Activated CD4-positive, alpha-beta memory T cell treated with anti-CD3 and anti-CD28 coated beads for 36 hours (primary cell): ENCODE measurements at regions of chr12 and their contacts with region 1.

Region 1: DNA sequence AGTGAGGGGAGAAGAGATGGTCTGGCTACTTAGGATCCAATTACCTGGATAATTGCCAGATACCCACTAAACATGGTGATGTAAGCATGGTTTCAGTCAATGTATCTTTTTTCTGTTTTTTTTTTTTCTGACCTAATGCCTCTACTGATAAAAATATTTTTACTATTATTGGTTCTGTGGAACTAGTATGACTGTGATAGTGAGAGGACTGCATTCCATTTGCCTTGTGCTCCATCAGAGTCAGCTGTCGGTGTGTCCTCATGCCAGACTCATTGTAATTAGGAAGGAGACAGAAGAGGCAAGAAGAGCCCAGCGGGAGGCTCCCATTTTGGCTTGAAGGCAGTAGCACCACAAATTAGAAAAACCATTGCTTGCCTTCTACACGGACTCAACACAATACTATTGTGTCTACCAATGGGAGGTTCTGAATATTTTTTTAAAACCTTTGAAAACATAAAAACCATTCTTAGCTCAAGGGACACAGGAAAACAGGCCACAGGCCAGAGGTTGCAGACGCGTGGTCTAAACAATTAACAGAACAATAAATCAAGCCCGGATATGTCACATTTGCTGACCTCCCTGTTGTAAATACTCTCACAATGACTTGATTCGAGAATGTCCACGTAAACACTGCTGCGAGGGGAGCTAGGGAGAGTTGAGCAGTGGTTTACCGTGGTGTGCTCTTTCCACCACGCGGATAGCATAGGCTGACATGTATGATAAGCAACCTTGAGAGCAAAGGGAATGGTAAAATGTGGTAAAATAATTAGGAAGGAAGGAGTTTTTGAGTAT is 13.5 kb upstream of the DCP1B start:
- DNase-seq: no peak
- H3K4me3 Mint-ChIP-seq: no peak overlapping the region
- H3K27ac Mint-ChIP-seq: no peak overlapping the region
- H3K4me1 Mint-ChIP-seq: peaks cover 10% of the 10 kb centered on the region
- H3K27me3 Mint-ChIP-seq: peaks cover 8% of the 10 kb centered on the region

Region 2: GRCh38 chr12:2034633-2035430 is 17.1 kb after region 1 on chr12:
- CTCF ChIA-PET with region 1: interaction called, 12 read pairs
- POLR2A ChIA-PET with region 1: no interaction called
- intact Hi-C with region 1: no loop called
- DNase-seq: peak; percentile 89
- H3K4me3 Mint-ChIP-seq: peak overlapping the region; percentile 62
- H3K27ac Mint-ChIP-seq: no peak overlapping the region
- H3K4me1 Mint-ChIP-seq: peaks cover 10% of the 10 kb centered on the region
- H3K27me3 Mint-ChIP-seq: peaks cover 26% of the 10 kb centered on the region

Region 3: DNA sequence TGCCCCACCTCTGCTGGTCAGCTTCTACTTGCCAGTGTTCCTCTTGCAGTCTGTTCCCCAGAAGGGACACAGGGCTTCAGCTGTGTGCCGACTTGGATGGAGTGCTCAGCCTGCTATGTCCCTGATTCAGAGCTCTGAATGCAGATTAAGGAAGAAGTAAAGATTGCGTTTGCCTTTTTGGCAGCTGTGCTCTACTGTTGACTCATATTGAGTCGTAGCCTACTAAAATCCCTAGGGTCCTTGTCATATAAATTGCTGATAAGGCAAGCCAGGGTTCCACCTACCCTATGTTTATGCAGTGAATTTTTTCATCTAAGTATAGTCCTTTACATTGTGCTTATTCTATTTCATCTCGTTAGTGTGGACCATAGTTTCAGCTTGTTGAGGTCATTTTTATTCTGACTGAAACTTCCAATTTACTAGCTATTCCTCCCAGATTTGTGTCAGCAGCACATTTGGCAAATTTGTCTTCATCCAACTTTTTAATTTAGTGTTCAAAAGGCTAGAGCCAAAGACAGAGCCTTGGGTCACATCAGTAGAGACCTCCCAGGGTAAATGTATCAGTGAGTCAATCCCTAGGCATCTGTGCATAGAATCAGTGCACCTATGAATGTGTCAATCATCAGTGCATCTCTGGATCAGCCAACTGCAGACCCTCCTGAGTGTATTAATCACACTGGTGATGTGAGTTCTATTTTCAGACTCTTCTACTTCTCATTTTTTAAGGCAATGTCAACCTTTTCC is 67.0 kb after region 1 on chr12:
- CTCF ChIA-PET with region 1: no interaction called
- POLR2A ChIA-PET with region 1: no interaction called
- intact Hi-C with region 1: no loop called
- DNase-seq: no peak
- H3K4me3 Mint-ChIP-seq: no peak overlapping the region
- H3K27ac Mint-ChIP-seq: no peak overlapping the region
- H3K4me1 Mint-ChIP-seq: no peaks in the 10 kb centered on the region
- H3K27me3 Mint-ChIP-seq: peaks cover 3% of the 10 kb centered on the region

Region 4: GRCh38 chr12:2095864-2096263 is 78.1 kb after region 1 on chr12:
- CTCF ChIA-PET with region 1: no interaction called
- POLR2A ChIA-PET with region 1: no interaction called
- intact Hi-C with region 1: no loop called
- DNase-seq: no peak
- H3K4me3 Mint-ChIP-seq: no peak overlapping the region
- H3K27ac Mint-ChIP-seq: no peak overlapping the region
- H3K4me1 Mint-ChIP-seq: no peaks in the 10 kb centered on the region
- H3K27me3 Mint-ChIP-seq: no peaks in the 10 kb centered on the region

Region 5: GRCh38 chr12:2215670-2216560 is 198.2 kb after region 1 on chr12:
- CTCF ChIA-PET with region 1: no interaction called
- POLR2A ChIA-PET with region 1: no interaction called
- intact Hi-C with region 1: no loop called
- DNase-seq: no peak
- H3K4me3 Mint-ChIP-seq: no peak overlapping the region
- H3K27ac Mint-ChIP-seq: no peak overlapping the region
- H3K4me1 Mint-ChIP-seq: no peaks in the 10 kb centered on the region
- H3K27me3 Mint-ChIP-seq: peaks cover 3% of the 10 kb centered on the region